Heart left ventricle (tissue), 16 donors: ENCODE measurements at regions of chr4 and their contacts with region 1.

Region 1: GRCh38 chr4:102449751-102450352 is 51.3 kb upstream of the NFKB1 start:
- DNase-seq: peak in 1 of 5 donors; percentile 28
- ATAC-seq: peak in 2 of 4 donors; percentile 52 to 55
- H3K4me3 ChIP-seq: no peak overlapping the region
- H3K27ac ChIP-seq: no peak overlapping the region
- H3K4me1 ChIP-seq: peaks cover 0 to 3% (median 0%) of the 10 kb centered on the region in 12 donors
- H3K27me3 ChIP-seq: no peaks in the 10 kb centered on the region
- CTCF ChIP-seq: peak; percentile 39 to 74 (median 61)
- POLR2A ChIP-seq: no peak

Region 2: DNA sequence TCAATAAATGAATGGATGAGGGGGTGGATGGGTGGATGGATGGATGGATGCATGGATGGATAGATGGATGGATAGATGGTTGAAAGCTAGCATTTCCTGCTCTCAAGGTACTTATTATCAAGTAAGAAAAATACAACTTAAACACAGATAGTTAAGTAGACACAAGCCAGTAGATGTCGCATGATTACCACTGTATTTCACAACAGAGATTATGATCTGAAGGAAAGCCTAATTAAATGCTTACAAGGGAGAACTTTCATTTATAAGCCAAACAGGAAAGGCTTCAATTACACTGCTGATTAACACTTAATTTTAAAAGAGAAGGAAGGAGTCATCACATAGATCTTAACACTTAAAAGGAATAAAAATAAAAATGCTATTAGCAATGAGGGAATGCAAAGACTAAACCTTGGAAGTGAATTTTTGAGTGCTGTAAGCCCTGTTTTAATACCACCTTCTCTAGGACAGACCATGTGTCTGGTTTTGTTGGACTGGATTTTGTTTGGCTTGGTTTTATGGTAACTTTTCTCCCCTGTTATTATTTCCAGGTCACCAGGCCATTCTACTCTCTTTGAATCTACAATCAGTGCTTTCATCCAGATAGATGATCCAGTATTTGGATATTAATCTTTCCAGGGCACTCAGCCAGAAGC is 29.2 kb before region 1 on chr4:
- intact Hi-C with region 1: no loop called
- DNase-seq: no peak
- ATAC-seq: no peak
- H3K4me3 ChIP-seq: no peak overlapping the region
- H3K27ac ChIP-seq: no peak overlapping the region
- H3K4me1 ChIP-seq: peaks cover 0 to 4% (median 0%) of the 10 kb centered on the region in 12 donors
- H3K27me3 ChIP-seq: no peaks in the 10 kb centered on the region
- CTCF ChIP-seq: peak in 2 of 12 donors; percentile 6 to 14
- POLR2A ChIP-seq: no peak

Region 3: DNA sequence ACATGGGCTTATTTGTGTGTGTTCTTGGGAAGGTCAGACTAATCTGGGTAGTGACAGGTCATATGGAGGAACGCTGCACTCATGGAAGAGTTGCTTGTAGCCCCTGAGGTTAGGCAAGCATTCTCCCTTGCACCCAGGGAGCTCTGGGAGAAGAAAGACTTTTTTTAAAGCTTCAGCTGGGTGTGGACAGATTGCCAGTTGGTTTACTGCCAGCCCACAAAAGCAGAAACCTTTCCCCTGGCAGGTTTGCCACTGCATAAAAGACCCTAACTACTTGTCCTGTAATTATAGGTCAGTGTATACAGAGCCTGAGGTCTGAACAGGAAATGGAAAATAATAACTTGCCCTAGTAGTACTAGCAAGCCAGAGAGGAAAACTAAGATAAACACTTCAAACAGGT is 43.9 kb after region 1 on chr4:
- intact Hi-C with region 1: loop called in 4 of 10 experiments (anchors 5 to 10 kb)
- DNase-seq: no peak
- ATAC-seq: no peak
- H3K4me3 ChIP-seq: no peak overlapping the region
- H3K27ac ChIP-seq: no peak overlapping the region
- H3K4me1 ChIP-seq: peaks cover 0 to 9% (median 0%) of the 10 kb centered on the region in 12 donors
- H3K27me3 ChIP-seq: no peaks in the 10 kb centered on the region
- CTCF ChIP-seq: no peak
- POLR2A ChIP-seq: no peak

Region 4: DNA sequence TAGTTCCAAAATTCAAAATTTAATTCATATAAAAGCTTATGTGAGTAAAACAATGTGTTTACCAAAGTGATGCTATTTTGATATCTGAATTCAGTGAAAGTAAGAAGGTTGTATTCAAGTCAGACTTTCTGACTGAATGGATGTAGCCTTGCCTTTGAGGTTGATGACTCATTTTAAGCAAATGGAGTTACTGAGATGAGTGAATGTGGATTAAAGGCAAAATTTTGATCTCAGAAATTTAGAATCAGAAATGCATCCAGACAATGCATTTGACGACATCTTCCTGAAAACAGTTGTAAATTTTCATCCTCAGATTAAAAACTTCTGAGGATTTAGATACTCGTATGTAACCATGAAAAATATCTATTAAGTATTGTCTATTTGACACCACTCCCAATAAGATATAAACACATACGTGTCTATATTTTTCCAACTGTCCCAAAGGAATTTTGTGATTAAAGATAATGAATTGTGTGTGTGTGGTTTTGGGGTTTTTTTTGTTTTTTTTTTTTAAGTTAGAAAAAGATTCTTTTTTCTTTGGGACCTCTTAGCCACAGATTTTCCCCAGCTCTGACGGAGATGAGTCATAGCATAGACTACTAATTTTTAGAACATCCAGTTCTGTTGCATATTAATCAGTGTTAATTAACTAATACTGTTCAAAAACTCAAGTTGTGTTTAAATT is 85.7 kb after region 1 on chr4:
- intact Hi-C with region 1: no loop called
- DNase-seq: no peak
- ATAC-seq: no peak
- H3K4me3 ChIP-seq: no peak overlapping the region
- H3K27ac ChIP-seq: peak overlapping the region in 1 of 12 donors; percentile 7
- H3K4me1 ChIP-seq: peaks cover 0 to 28% (median 0%) of the 10 kb centered on the region in 12 donors
- H3K27me3 ChIP-seq: no peaks in the 10 kb centered on the region
- CTCF ChIP-seq: no peak
- POLR2A ChIP-seq: no peak

Region 5: GRCh38 chr4:102610007-102610406 is 160.2 kb after region 1 on chr4:
- intact Hi-C with region 1: loop called in 2 of 10 experiments (anchors 5 to 10 kb)
- DNase-seq: no peak
- ATAC-seq: no peak
- H3K4me3 ChIP-seq: no peak overlapping the region
- H3K27ac ChIP-seq: no peak overlapping the region
- H3K4me1 ChIP-seq: peaks cover 0 to 31% (median 0%) of the 10 kb centered on the region in 12 donors
- H3K27me3 ChIP-seq: no peaks in the 10 kb centered on the region
- CTCF ChIP-seq: peak in 4 of 12 donors; percentile 15 to 25 (median 16)
- POLR2A ChIP-seq: no peak

Region 6: GRCh38 chr4:103008875-103009729 is 559.2 kb after region 1 on chr4:
- intact Hi-C with region 1: loop called (anchors 2 to 5 kb)
- DNase-seq: no peak
- ATAC-seq: peak; percentile 58 to 89 (median 84)
- H3K4me3 ChIP-seq: no peak overlapping the region
- H3K27ac ChIP-seq: no peak overlapping the region
- H3K4me1 ChIP-seq: peaks cover 0 to 18% (median 10%) of the 10 kb centered on the region in 12 donors
- H3K27me3 ChIP-seq: no peaks in the 10 kb centered on the region
- CTCF ChIP-seq: peak; percentile 64 to 91 (median 74)
- POLR2A ChIP-seq: no peak

Region 7: DNA sequence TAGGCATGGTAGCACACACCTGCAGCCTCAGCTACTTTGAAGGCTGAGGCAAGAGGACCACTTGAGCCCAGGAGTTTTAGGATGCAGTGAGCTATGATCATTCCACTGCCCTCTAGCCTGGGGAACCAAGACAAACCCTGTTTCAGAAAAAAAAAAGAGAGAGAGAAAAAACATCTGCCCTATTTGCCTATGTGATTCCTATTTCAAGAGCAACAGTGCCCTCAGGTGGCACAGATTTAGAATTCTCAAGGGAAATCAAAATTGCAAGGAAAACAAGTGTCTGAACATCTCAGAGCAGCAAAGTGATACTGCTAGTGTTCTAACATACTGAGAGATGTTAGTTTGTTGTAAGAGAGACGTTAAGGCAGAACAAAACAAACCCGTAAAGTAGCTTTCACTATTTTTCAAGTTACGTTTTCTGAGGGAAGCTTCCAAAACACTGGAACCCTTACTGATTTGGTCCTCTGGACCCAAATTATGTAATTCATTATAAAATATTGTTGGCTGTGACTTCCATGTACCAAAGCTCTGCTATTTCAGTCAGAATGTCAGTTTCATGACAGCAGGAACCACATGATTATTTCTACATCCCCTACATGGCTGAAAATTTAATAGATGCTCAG is 641.9 kb after region 1 on chr4:
- intact Hi-C with region 1: loop called in 5 of 10 experiments (anchors 5 to 10 kb)
- DNase-seq: no peak
- ATAC-seq: no peak
- H3K4me3 ChIP-seq: no peak overlapping the region
- H3K27ac ChIP-seq: no peak overlapping the region
- H3K4me1 ChIP-seq: peaks cover 0 to 14% (median 0%) of the 10 kb centered on the region in 12 donors
- H3K27me3 ChIP-seq: no peaks in the 10 kb centered on the region
- CTCF ChIP-seq: peak in 11 of 12 donors; percentile 12 to 55 (median 42)
- POLR2A ChIP-seq: no peak

Region 8: GRCh38 chr4:104436542-104436941 is 1986.7 kb after region 1 on chr4:
- intact Hi-C with region 1: no loop called
- DNase-seq: no peak
- ATAC-seq: peak; percentile 65 to 87 (median 78)
- H3K4me3 ChIP-seq: no peak overlapping the region
- H3K27ac ChIP-seq: no peak overlapping the region
- H3K4me1 ChIP-seq: peaks cover 0 to 3% (median 0%) of the 10 kb centered on the region in 12 donors
- H3K27me3 ChIP-seq: no peaks in the 10 kb centered on the region
- CTCF ChIP-seq: no peak
- POLR2A ChIP-seq: no peak